Activated CD8-positive, alpha-beta T cell treated with anti-CD3 and anti-CD28 coated beads for 36 hours (primary cell): ENCODE measurements at regions of chr1 and their contacts with region 1.

Region 1: DNA sequence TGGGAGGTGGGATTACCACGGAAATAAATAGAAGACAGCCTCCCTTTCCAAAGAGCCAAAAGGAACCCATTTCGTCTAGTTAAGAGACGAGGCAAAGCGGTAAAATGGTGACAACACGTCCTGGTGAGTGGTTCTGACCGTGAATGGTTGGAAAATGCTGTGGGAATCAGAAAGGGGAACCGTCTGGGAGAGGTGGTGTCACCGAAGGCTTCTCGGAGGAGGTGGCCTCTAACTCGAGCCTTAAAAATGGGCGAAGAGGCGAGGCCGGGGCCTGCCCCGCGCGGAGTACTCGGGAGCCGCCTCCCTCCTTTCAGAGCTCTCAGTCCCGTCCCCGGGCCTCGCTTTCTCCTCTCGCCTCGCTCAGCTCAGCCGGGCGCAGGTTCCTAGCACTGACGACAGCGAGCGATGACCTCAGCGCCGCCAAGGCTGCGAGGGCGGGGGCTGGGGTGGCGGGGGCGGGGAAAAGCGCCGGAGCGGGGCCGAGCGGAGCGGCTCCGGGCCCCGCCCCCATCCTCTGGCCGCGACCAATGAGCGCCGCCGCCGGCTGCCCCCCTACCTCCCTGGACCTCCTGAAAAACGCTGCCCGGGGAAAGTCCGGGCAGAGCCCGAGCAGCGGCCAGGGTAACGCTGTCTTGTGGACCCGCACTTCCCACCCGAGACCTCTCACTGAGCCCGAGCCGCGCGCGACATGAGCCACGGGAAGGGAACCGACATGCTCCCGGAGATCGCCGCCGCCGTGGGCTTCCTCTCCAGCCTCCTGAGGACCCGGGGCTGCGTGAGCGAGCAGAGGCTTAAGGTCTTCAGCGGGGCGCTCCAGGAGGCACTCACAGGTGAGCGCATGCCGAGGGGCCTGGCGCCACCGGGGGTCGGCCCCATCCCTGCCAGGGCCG is at the start of gene BTG2:
- DNase-seq: peak; percentile 93
- ATAC-seq: peak; percentile 85
- H3K4me3 Mint-ChIP-seq: peak within 1 kb of the TSS; percentile 99
- H3K27ac Mint-ChIP-seq: peak within 1 kb of the TSS; percentile 98
- H3K4me1 Mint-ChIP-seq: peaks cover 55% of the 10 kb centered on the region
- H3K27me3 Mint-ChIP-seq: no peaks in the 10 kb centered on the region
- CTCF ChIP-seq: no peak
- total RNA-seq, gene BTG2: 115 TPM

Region 2: DNA sequence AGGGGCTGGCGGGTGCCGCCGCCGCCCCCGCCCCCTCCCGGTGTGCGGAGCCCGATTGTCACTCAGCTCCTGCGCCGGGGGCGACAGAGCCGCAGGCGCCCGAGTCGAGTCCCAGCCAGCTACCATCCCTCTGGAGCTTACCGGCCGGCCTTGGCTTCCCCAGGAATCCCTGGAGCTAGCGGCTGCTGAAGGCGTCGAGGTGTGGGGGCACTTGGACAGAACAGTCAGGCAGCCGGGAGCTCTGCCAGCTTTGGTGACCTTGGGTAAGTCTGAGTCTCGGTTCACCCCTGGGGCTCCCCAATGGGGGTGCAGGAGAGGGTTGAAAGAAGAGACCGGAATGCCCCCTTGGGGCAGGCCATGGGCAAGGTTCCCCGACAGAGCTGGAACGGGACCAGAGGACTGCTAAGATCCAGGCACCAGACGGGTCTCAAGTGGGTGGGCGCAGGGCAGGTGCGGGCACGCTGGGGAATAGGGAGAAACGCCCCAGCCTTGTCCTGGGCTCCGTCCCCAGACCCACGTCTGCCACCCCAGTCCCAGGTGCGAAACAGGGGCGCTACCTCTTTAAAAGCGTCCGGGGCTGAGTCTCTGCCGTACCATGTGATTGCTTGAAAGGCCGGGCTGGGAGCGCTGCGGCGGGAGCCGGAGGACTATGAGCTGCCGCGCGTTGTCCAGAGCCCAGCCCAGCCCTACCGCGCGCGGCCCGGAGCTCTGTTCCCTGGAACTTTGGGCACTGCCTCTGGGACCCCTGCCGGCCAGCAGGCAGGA is 177.3 kb before region 1 on chr1 and contains the start of gene ADORA1:
- CTCF ChIA-PET with region 1: no interaction called
- POLR2A ChIA-PET with region 1: no interaction called
- intact Hi-C with region 1: no loop called
- DNase-seq: peak; percentile 15
- ATAC-seq: peak; percentile 51
- H3K4me3 Mint-ChIP-seq: no peak within 1 kb of the TSS
- H3K27ac Mint-ChIP-seq: no peak within 1 kb of the TSS
- H3K4me1 Mint-ChIP-seq: peaks cover 4% of the 10 kb centered on the region
- H3K27me3 Mint-ChIP-seq: peaks cover 35% of the 10 kb centered on the region
- CTCF ChIP-seq: no peak
- total RNA-seq, gene ADORA1: not detected

Region 3: DNA sequence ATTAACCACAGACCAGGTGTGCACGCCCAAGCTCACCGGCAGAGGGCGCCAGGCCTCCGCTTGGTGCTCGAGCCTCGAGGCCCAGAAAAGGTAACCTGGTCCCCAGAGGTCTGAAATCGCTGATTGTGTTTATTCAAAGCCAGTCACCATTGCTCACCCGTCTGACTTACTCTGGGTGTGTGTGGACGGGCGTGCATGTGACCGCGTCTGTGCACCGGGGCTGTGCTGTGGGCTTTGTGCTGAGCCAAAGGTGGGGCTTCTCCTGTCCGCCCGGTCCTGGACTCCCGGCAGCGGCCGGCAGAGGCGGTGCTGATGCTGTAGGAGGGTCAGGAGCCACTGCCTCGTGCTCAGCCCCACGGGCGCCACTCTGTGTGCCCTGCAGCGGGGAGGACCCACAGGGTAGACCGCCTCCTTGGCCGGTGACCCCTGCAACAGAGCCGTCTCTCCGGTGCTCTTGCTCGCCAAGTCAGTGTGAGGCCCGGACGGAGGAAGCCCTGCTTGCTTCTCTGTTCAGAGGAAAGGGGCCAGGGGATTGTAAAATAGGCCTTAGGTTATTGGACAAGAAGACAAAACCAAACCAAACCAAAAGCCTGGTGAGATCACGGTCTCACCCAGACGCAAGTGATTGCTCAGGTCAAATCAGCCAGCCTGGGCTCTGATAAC is 31.8 kb before region 1 on chr1:
- CTCF ChIA-PET with region 1: interaction called, 237 read pairs
- POLR2A ChIA-PET with region 1: interaction called, 94 read pairs
- intact Hi-C with region 1: loop called (anchors 5 kb)
- DNase-seq: peak; percentile 94
- ATAC-seq: peak; percentile 73
- H3K4me3 Mint-ChIP-seq: peak overlapping the region; percentile 77
- H3K27ac Mint-ChIP-seq: peak overlapping the region; percentile 83
- H3K4me1 Mint-ChIP-seq: peaks cover 57% of the 10 kb centered on the region
- H3K27me3 Mint-ChIP-seq: no peaks in the 10 kb centered on the region
- CTCF ChIP-seq: peak; percentile 93

Region 4: DNA sequence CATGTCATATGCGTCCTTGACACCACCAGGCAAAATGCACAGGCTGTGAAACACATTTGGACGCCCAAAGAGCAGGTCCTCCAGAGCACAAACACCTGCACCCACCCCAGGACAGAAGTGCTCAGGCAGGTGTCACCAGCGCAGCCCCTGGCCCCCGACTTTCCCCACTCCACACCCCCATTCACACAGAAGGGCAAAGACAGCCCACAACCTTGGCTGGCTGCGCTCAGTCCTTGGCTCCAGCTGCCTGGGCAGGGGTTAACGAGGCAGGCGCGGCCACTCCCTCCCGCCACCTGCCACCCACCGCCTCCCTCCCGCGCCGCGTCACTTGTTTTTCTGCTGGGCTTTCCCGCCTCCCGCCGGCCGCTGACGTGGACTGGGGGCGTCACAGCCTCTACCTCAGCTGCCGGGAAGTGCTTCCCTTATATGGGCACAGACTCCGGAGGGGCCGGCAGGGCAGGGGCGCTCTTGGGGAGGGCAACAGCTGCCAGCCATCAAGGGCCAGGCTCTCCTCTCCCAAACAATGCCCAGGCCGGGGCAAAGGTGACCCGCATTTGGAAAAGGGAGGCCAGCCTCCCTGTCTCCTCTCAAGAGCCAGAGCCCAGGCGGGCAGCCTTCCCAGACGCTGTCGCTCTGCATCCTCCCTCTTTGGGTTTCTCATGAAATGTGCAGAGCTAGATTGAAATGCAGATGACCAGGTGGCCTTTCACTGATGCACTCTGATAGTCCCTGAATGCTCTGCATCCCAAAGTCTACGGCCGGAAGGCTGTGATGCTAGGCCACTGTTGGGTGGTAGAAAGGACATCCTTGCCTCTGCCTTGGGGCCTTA is 14.7 kb before region 1 on chr1:
- CTCF ChIA-PET with region 1: interaction called, 104 read pairs
- POLR2A ChIA-PET with region 1: interaction called, 225 read pairs
- intact Hi-C with region 1: no loop called
- DNase-seq: peak; percentile 99
- ATAC-seq: peak; percentile 55
- H3K4me3 Mint-ChIP-seq: peak overlapping the region; percentile 83
- H3K27ac Mint-ChIP-seq: peak overlapping the region; percentile 100
- H3K4me1 Mint-ChIP-seq: peaks cover 79% of the 10 kb centered on the region
- H3K27me3 Mint-ChIP-seq: peaks cover 1% of the 10 kb centered on the region
- CTCF ChIP-seq: no peak

Region 5: DNA sequence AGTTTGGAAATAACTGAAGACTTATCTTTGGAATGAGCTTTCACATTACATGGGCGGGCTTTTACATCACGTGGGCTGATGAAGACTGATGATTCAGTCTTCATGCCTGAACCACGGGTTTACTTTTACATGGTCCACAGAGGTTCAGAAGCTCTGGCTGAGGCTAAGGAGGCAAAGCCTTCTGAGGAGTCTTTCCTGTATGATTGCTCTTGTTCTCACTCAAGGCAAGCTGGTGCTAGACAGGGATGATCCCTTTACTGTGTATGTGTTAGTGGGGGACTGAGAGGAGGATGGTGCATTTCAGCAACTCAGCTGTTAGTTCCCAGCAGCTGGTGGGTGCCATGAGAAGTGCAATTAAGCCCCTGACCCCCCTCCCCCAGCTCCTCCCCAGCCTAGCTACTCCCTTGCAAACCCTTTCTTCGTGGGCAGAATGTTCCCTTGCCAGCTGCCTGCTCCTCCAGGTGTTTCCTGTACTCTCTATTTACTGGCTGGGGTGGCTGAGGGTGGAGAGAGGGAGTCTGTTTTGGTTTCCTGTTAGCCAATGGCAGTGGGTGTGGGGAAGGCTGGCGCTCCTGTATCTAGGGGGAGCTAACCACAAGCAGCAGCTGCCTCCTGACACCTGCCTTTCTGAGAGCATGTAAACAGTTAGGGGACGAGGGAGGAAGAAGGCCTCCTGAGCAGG is 15.6 kb after region 1 on chr1:
- CTCF ChIA-PET with region 1: interaction called, 108 read pairs
- POLR2A ChIA-PET with region 1: interaction called, 224 read pairs
- intact Hi-C with region 1: no loop called
- DNase-seq: peak; percentile 82
- ATAC-seq: peak; percentile 63
- H3K4me3 Mint-ChIP-seq: no peak overlapping the region
- H3K27ac Mint-ChIP-seq: peak overlapping the region; percentile 80
- H3K4me1 Mint-ChIP-seq: peaks cover 78% of the 10 kb centered on the region
- H3K27me3 Mint-ChIP-seq: no peaks in the 10 kb centered on the region
- CTCF ChIP-seq: no peak